Breast epithelium (tissue), 4 donors: ENCODE measurements at regions of chr11 and their contacts with region 1.

Region 1: GRCh38 chr11:30545507-30545906 is 40.6 kb downstream of the MPPED2 start:
- DNase-seq: no peak
- H3K4me3 ChIP-seq: no peak overlapping the region
- H3K27ac ChIP-seq: no peak overlapping the region
- H3K4me1 ChIP-seq: no peaks in the 10 kb centered on the region
- H3K27me3 ChIP-seq: no peaks in the 10 kb centered on the region
- CTCF ChIP-seq: no peak
- POLR2A ChIP-seq: no peak

Region 2: GRCh38 chr11:29231991-29232390 is 1313.5 kb before region 1 on chr11:
- intact Hi-C with region 1: loop called (anchors 10 kb)
- DNase-seq: no peak
- H3K4me3 ChIP-seq: no peak overlapping the region
- H3K27ac ChIP-seq: no peak overlapping the region
- H3K4me1 ChIP-seq: no peaks in the 10 kb centered on the region
- H3K27me3 ChIP-seq: no peaks in the 10 kb centered on the region
- CTCF ChIP-seq: no peak
- POLR2A ChIP-seq: no peak

Region 3: DNA sequence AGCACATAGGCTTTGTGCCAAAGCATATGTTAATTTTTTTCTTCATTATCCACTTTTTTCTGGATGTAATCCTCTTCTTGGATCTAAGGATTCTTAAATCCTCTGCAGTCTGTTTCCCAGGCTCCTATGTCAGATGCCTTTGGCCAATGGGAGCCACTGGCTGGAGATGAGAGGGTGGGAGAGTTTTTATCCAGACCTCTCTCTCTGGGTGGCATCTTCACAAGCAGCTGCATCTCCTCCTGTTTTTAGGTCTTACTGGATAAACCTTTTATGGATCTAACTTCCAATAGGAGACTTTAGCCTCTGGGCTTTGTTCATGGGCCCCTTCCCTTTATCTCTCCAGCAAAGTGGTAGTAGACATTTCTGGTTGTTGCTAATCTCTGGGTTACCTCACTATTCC is 63.0 kb after region 1 on chr11:
- intact Hi-C with region 1: no loop called
- DNase-seq: no peak
- H3K4me3 ChIP-seq: no peak overlapping the region
- H3K27ac ChIP-seq: no peak overlapping the region
- H3K4me1 ChIP-seq: no peaks in the 10 kb centered on the region
- H3K27me3 ChIP-seq: no peaks in the 10 kb centered on the region
- CTCF ChIP-seq: no peak
- POLR2A ChIP-seq: no peak